ENCODE measurements at regions of chr3 and their contacts with region 1.

Region 1: GRCh38 chr3:118817748-118818165 is 216.9 kb downstream of the IGSF11 start:
- DNase-seq: peak; percentile 54
- H3K4me3 Mint-ChIP-seq: no peak overlapping the region
- H3K27ac Mint-ChIP-seq: no peak overlapping the region
- H3K4me1 Mint-ChIP-seq: no peaks in the 10 kb centered on the region
- H3K27me3 Mint-ChIP-seq: no peaks in the 10 kb centered on the region
- CTCF ChIP-seq: peak; percentile 73

Region 2: GRCh38 chr3:118760585-118761290 is 57.0 kb before region 1 on chr3:
- CTCF ChIA-PET with region 1: no interaction called
- intact Hi-C with region 1: loop called (anchors 5 kb)
- DNase-seq: peak; percentile 4
- H3K4me3 Mint-ChIP-seq: no peak overlapping the region
- H3K27ac Mint-ChIP-seq: no peak overlapping the region
- H3K4me1 Mint-ChIP-seq: no peaks in the 10 kb centered on the region
- H3K27me3 Mint-ChIP-seq: no peaks in the 10 kb centered on the region
- CTCF ChIP-seq: no peak

Measured in Calu3 (cell line).